ENCODE measurements at regions of chr6 and their contacts with region 1.

Region 1: GRCh38 chr6:11460001-11460668 is 77.4 kb upstream of the TMEM170B start:
- DNase-seq: peak; percentile 22
- H3K4me3 Mint-ChIP-seq: peak overlapping the region; percentile 61
- H3K27ac Mint-ChIP-seq: peak overlapping the region; percentile 97
- H3K4me1 Mint-ChIP-seq: peaks cover 40% of the 10 kb centered on the region
- H3K27me3 Mint-ChIP-seq: peaks cover 2% of the 10 kb centered on the region

Region 2: GRCh38 chr6:11172501-11173332 is 287.4 kb before region 1 on chr6:
- CTCF ChIA-PET with region 1: interaction called, 6 read pairs
- intact Hi-C with region 1: loop called (anchors 1 kb)
- DNase-seq: peak; percentile 84
- H3K4me3 Mint-ChIP-seq: no peak overlapping the region
- H3K27ac Mint-ChIP-seq: no peak overlapping the region
- H3K4me1 Mint-ChIP-seq: peaks cover 11% of the 10 kb centered on the region
- H3K27me3 Mint-ChIP-seq: no peaks in the 10 kb centered on the region

Region 3: GRCh38 chr6:11317885-11318771 is 142.0 kb before region 1 on chr6:
- CTCF ChIA-PET with region 1: no interaction called
- intact Hi-C with region 1: loop called (anchors 1 kb)
- DNase-seq: peak; percentile 91
- H3K4me3 Mint-ChIP-seq: no peak overlapping the region
- H3K27ac Mint-ChIP-seq: peak overlapping the region; percentile 90
- H3K4me1 Mint-ChIP-seq: peaks cover 43% of the 10 kb centered on the region
- H3K27me3 Mint-ChIP-seq: no peaks in the 10 kb centered on the region

Region 4: DNA sequence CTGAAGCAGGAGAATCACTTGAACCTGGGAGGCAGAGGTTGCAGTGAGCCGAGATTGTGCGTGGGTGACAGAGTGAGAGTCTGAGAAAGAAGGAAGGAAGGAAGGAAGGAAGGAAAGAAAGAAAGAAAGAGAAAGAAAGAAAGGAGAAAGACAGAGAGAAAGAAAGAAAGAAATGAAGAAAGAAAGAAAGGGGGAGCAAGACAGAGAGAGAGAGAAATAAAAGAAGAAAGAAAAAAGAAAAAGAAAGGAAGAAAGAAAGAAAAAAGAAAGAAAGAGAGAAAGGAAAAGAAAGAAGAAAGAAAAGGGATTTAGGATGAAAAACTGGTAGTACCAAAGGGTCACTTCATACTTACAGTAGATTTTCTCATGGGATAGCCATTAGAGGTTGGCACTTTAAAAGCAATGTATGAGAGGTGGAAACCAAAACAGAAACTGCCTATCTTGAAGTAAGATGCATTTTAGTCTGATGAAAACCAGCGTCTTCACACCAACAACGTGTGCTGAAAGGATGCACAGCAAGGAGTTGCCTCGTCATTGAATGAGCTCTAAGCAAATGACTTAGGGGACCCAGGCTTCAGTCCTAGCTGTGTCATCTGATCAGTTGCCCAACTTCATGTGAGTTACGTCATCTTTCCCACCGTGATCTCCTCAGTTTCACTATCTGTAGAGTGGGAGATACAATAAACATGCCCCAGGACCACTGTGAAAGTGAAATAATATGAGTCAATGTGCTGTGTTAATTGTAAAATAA is 93.8 kb before region 1 on chr6:
- CTCF ChIA-PET with region 1: interaction called, 6 read pairs
- intact Hi-C with region 1: loop called (anchors 1 kb)
- DNase-seq: peak; percentile 75
- H3K4me3 Mint-ChIP-seq: peak overlapping the region; percentile 29
- H3K27ac Mint-ChIP-seq: peak overlapping the region; percentile 67
- H3K4me1 Mint-ChIP-seq: peaks cover 96% of the 10 kb centered on the region
- H3K27me3 Mint-ChIP-seq: no peaks in the 10 kb centered on the region

Region 5: DNA sequence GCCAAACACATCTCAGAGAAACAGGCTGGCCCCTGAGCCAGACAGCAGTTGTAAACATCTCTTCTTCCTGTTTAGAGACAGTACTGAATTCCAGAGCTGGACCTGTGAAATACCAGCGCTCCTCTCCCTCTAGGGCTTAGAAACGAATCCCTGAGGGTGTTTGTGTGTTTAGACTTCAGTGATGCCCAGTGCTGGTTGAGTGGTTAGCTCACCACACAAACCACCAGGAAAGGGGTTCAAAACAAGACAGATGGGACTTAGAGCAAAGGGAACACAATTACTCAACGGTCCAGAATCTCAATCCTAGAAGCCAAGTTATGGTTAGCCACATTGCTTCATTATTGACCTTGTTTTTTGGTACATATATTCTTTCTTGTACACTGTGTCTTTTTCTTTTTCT is 31.2 kb before region 1 on chr6:
- CTCF ChIA-PET with region 1: no interaction called
- intact Hi-C with region 1: loop called (anchors 1 kb)
- DNase-seq: no peak
- H3K4me3 Mint-ChIP-seq: no peak overlapping the region
- H3K27ac Mint-ChIP-seq: no peak overlapping the region
- H3K4me1 Mint-ChIP-seq: peaks cover 35% of the 10 kb centered on the region
- H3K27me3 Mint-ChIP-seq: no peaks in the 10 kb centered on the region

Region 6: DNA sequence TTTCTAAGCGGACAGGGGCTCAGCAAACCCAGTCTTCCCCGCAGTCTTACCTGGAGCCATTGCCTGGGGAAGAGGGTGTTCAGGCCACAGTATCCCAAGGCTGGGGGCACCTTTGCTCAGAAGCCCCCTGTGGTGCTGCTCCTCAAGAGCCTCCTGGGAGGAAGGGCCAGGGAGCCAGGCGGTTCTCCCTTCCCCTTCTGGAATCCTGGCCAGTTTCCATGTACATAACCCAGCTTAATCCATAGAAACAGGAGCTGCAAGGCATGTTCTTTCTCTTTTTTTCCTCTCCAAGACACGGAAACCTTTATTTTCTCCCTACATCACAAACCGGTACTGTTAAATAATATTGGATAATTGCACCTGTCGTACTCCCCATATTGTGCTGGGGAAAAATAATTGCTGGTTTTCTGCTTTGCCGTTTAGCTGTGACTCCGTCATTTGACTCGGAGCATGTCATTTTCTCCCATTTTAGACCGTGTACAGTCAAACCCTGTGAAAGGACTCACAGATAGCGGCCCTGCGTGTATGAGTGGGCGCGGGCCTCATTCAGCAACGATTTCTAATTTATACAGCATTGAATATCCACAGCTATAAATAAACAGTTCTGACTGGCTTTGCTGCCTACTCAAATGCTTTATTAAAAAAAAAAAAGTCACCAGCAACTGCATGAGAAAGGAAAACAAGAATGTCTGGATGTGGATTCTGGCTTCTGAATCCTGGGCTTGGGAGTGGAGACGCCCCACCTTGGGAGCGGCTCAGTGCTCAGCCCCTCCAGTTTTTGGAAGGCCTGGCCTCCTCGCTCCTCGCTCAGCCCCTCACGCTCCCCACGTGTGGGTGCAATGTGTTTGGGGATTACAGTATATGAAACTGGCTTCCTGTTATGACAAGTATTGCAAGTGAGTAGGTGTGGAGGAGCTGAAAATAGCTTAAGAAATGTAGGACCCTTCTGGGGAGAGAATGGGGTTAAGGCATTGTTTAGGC is 251.2 kb after region 1 on chr6:
- CTCF ChIA-PET with region 1: no interaction called
- intact Hi-C with region 1: loop called (anchors 2 kb)
- DNase-seq: peak; percentile 79
- H3K4me3 Mint-ChIP-seq: peak overlapping the region; percentile 57
- H3K27ac Mint-ChIP-seq: peak overlapping the region; percentile 97
- H3K4me1 Mint-ChIP-seq: peaks cover 79% of the 10 kb centered on the region
- H3K27me3 Mint-ChIP-seq: no peaks in the 10 kb centered on the region

Region 7: GRCh38 chr6:13454286-13455221 is 1994.4 kb after region 1 on chr6:
- CTCF ChIA-PET with region 1: no interaction called
- intact Hi-C with region 1: loop called (anchors 2 kb)
- DNase-seq: peak; percentile 86
- H3K4me3 Mint-ChIP-seq: peak overlapping the region; percentile 46
- H3K27ac Mint-ChIP-seq: peak overlapping the region; percentile 93
- H3K4me1 Mint-ChIP-seq: peaks cover 45% of the 10 kb centered on the region
- H3K27me3 Mint-ChIP-seq: no peaks in the 10 kb centered on the region

Measured in activated naive CD4-positive, alpha-beta T cell treated with anti-CD3 and anti-CD28 coated beads for 36 hours (primary cell).